ENCODE measurements at regions of chr14 and their contacts with region 1.

Region 1: DNA sequence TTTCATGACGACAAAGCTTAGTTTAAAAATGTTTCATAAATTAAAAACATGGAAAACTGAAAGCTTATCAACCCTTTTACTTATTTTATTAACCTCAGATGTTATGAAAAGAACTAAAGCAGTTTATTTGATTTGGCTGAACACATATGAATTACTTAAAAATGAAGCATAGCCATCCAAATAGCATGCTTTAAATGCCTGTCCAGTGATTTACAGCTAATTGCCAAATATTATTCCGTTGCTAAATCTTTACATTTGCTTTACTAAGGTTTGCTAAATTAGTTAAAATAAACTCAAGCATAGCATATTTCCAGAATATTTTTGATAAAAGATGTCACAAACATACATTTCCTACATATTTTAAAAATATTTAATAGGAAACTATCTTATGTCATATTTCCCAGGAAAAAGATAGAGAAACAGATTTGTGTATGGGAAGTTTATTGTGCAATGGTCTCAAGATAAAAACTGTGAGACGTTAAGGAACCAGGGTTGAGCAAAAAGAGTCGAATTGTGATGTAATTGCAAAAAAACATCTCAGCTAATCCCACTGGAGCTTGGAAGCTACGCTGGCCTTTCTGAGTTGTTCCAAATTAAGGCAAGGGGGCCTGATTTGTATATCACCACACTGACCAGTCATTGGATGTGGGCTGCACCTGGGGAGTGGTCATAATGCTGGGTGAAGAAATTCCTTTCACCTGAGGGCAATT is 25.8 kb downstream of the GPR135 start:
- DNase-seq: no peak

Region 2: GRCh38 chr14:59126710-59127432 is 312.5 kb before region 1 on chr14:
- intact Hi-C with region 1: loop called in 1 of 2 experiments (anchors 2 kb)
- DNase-seq: no peak

Region 3: GRCh38 chr14:59262717-59263454 is 176.5 kb before region 1 on chr14:
- intact Hi-C with region 1: no loop called
- DNase-seq: no peak

Measured in posterior vena cava (tissue), 2 donors.